Vagina (tissue), 2 donors: ENCODE measurements at regions of chr13 and their contacts with region 1.

Region 1: DNA sequence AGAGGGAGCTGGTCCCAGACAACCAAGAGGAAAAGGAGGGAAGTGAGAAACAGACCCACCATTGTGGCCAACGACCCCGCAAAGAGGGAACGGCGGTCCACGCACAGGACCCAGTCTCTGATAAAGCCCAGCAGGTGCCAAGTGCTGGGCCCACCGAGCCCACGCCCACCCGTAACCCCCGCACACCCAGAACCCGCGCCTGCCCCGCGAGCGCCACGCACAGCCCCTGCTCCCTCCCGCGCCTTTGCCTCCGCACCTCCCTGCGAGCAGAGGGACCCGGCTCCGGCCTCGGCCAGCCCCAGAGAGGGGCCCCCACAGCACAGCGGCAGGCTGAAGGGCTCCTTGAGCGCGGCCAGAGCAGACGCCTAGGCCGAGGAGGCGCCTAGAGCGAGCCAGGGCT is 1192.2 kb downstream of the PCDH17 start:
- DNase-seq: no peak
- H3K4me3 ChIP-seq: no peak overlapping the region
- H3K27ac ChIP-seq: no peak overlapping the region
- H3K4me1 ChIP-seq: no peaks in the 10 kb centered on the region
- H3K27me3 ChIP-seq: no peaks in the 10 kb centered on the region
- CTCF ChIP-seq: no peak
- POLR2A ChIP-seq: no peak

Region 2: GRCh38 chr13:58376775-58377174 is 446.9 kb before region 1 on chr13:
- intact Hi-C with region 1: no loop called
- DNase-seq: no peak
- H3K4me3 ChIP-seq: no peak overlapping the region
- H3K27ac ChIP-seq: no peak overlapping the region
- H3K4me1 ChIP-seq: no peaks in the 10 kb centered on the region
- H3K27me3 ChIP-seq: no peaks in the 10 kb centered on the region
- CTCF ChIP-seq: no peak
- POLR2A ChIP-seq: no peak

Region 3: GRCh38 chr13:58855283-58855682 is 31.6 kb after region 1 on chr13:
- intact Hi-C with region 1: loop called (anchors 1 kb)
- DNase-seq: no peak
- H3K4me3 ChIP-seq: no peak overlapping the region
- H3K27ac ChIP-seq: no peak overlapping the region
- H3K4me1 ChIP-seq: no peaks in the 10 kb centered on the region
- H3K27me3 ChIP-seq: no peaks in the 10 kb centered on the region
- CTCF ChIP-seq: no peak
- POLR2A ChIP-seq: no peak